GM10248 (cell line): ENCODE measurements at regions of chr2 and their contacts with region 1.

Region 1: GRCh38 chr2:27370026-27370815 is at the starts of genes EIF2B4 and SNX17:
- DNase-seq: peak; percentile 96
- CTCF ChIP-seq: peak; percentile 94

Region 2: DNA sequence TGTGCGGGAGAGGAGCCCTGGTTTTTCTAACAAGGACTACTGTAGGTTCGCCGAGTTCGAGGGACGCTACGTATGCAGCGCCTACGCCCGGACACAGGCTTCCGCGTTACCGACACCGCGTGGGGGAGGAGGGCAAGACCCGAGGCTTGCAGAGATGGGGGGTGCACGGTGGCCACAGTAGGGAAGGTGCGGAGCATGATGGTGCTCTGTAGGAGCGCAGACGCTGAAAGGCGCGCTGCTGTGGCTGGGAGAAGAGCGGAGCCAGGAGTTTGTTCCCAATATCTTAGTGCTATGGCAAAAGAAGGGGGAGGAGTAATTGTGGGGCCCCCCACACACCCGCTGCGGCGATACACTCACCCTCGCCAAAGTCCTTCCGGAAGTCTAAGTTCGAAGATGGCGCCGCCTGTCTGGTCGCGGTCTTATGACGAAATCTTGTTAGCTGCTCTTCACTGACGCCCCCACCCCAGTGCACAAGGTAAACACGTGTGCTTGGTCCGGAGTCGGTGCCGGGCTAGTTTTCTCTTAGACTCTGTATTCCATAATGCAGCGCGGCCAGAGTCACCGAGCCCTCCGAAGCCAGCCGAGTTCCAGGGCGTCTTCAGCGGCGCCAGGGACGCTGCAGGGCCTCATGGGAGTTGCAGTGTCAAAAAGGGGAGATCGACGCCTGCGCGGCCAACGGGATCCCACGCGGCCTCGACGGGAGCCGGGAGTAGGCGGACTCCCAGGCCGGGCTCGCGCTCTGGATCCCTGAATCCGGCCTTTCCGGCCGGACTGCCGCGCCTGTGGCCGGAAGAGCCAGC is 13.6 kb before region 1 on chr2 and contains the start of gene GTF3C2:
- CTCF ChIA-PET with region 1: interaction called, 10 read pairs
- POLR2A ChIA-PET with region 1: no interaction called
- DNase-seq: peak; percentile 90
- CTCF ChIP-seq: no peak

Region 3: GRCh38 chr2:27380626-27381545 is 10.7 kb after region 1 on chr2 and contains the start of gene ZNF513:
- CTCF ChIA-PET with region 1: interaction called, 13 read pairs
- POLR2A ChIA-PET with region 1: interaction called, 7 read pairs
- DNase-seq: peak; percentile 95
- CTCF ChIP-seq: no peak

Region 4: GRCh38 chr2:27400348-27401135 is 30.3 kb after region 1 on chr2:
- CTCF ChIA-PET with region 1: no interaction called
- POLR2A ChIA-PET with region 1: no interaction called
- DNase-seq: no peak
- CTCF ChIP-seq: no peak